Stomach (tissue), 19 donors: ENCODE measurements at regions of chr2 and their contacts with region 1.

Region 1: GRCh38 chr2:95231723-95232122 is 24.4 kb downstream of the ZNF892 start:
- DNase-seq: peak; percentile 76 to 81
- H3K4me3 ChIP-seq: no peak overlapping the region
- H3K27ac ChIP-seq: no peak overlapping the region
- H3K4me1 ChIP-seq: no peaks in the 10 kb centered on the region
- H3K27me3 ChIP-seq: no peaks in the 10 kb centered on the region
- CTCF ChIP-seq: peak in 5 of 7 experiments; percentile 47 to 85 (median 72)
- EP300 ChIP-seq: no peak
- POLR2A ChIP-seq: no peak

Region 2: GRCh38 chr2:94986392-94986963 is 245.2 kb before region 1 on chr2:
- intact Hi-C with region 1: no loop called
- DNase-seq: peak; percentile 70 to 84
- H3K4me3 ChIP-seq: no peak overlapping the region
- H3K27ac ChIP-seq: no peak overlapping the region
- H3K4me1 ChIP-seq: no peaks in the 10 kb centered on the region
- H3K27me3 ChIP-seq: peaks cover 0 to 47% (median 12%) of the 10 kb centered on the region in 3 donors
- CTCF ChIP-seq: peak in 4 of 7 experiments; percentile 55 to 58 (median 58)
- EP300 ChIP-seq: no peak
- POLR2A ChIP-seq: no peak

Region 3: GRCh38 chr2:95314964-95315611 is 83.4 kb after region 1 on chr2:
- intact Hi-C with region 1: loop called (anchors 5 kb)
- DNase-seq: peak; percentile 65 to 74
- H3K4me3 ChIP-seq: no peak overlapping the region
- H3K27ac ChIP-seq: no peak overlapping the region
- H3K4me1 ChIP-seq: peaks cover 0 to 5% (median 0%) of the 10 kb centered on the region in 4 donors
- H3K27me3 ChIP-seq: peaks cover 0 to 18% (median 0%) of the 10 kb centered on the region in 3 donors
- CTCF ChIP-seq: peak in 4 of 7 experiments; percentile 58 to 82 (median 76)
- EP300 ChIP-seq: no peak
- POLR2A ChIP-seq: no peak